CD8-positive, alpha-beta memory T cell (primary cell): ENCODE measurements at regions of chr14 and their contacts with region 1.

Region 1: DNA sequence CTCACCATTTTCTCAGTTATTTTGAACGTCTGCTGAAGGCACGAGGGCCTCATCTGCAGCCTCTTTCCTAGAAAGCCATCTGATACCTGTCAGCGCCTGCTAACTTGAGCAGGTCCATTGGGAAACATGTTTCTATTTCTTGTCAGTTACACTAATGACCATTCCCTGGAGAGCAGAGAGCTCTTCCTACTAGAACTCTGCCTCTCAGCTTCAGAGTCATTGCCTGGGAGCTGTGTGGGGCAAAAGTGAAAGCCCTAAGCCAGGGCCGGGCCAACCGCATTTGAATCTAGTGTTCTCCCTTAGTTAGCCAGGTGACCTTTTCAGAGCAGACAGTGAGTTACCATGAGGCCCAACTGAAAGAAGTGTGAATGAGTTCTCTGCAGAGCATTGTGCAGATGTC is 135.8 kb downstream of the EML1 start:
- DNase-seq: no peak
- H3K4me3 ChIP-seq: no peak overlapping the region
- H3K4me3 Mint-ChIP-seq: peak overlapping the region in 1 of 7 donors; percentile 19
- H3K27ac ChIP-seq: no peak overlapping the region
- H3K27ac Mint-ChIP-seq: no peak overlapping the region
- H3K4me1 ChIP-seq: no peaks in the 10 kb centered on the region
- H3K4me1 Mint-ChIP-seq: no peaks in the 10 kb centered on the region
- H3K27me3 ChIP-seq: peaks cover 3% of the 10 kb centered on the region
- H3K27me3 Mint-ChIP-seq: peaks cover 8 to 19% of the 10 kb centered on the region in 2 donors

Region 2: DNA sequence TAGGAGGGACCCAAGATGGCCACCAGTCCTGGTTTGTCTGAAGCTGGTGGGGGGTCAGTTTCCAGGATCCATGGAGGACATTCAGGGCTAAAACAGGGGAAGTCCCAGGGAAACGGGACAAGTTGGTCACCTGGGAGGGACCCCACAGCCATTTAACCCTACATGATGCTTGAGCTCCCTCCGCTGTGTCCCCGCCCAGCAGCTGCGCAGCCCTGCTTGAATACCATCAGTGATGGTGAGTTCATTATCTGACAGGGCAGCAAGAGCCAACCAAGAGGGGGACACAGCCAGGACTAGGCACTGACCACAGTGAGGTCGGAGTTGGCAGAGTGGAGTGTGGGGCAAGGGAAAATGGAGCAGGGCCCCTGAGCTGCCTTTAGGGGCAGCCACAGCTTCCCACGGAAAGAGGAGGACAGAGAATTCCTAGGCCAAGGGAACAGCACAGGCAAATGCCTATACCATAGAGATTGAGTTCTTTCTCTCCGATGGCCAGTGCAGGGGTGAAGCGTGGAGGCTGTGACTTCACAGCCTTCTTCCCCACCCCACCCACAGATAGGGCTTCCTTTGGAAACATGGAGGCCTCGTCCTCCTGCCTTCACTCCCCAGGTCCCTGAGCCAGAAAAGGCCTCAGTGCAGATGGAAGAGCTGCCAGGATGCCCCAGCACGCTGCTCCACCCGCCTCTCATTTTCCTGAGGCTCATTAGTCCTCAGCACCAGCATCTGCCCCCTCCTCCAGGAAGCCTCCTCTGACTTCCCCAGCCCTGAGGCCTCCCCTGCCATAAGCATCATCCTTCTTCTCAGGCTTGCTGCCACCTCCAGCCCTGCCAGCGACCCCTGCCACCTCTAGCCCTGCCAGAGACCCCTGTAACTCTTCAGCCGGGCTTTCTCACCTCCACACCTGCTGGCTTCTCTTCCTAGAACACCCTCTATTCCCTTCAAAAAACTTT is 193.5 kb before region 1 on chr14:
- CTCF ChIA-PET with region 1: no interaction called
- POLR2A ChIA-PET with region 1: interaction called, 12 read pairs
- DNase-seq: peak in 1 of 5 donors; percentile 26
- H3K4me3 ChIP-seq: no peak overlapping the region
- H3K4me3 Mint-ChIP-seq: no peak overlapping the region
- H3K27ac ChIP-seq: no peak overlapping the region
- H3K27ac Mint-ChIP-seq: peak overlapping the region in 1 of 8 donors; percentile 32
- H3K4me1 ChIP-seq: no peaks in the 10 kb centered on the region
- H3K4me1 Mint-ChIP-seq: peaks cover 0 to 6% (median 2%) of the 10 kb centered on the region in 3 donors
- H3K27me3 ChIP-seq: peaks cover 8% of the 10 kb centered on the region
- H3K27me3 Mint-ChIP-seq: peaks cover 24 to 48% of the 10 kb centered on the region in 2 donors